Head of caudate nucleus (tissue), 42 donors: ENCODE measurements at regions of chr4 and their contacts with region 1.

Region 1: DNA sequence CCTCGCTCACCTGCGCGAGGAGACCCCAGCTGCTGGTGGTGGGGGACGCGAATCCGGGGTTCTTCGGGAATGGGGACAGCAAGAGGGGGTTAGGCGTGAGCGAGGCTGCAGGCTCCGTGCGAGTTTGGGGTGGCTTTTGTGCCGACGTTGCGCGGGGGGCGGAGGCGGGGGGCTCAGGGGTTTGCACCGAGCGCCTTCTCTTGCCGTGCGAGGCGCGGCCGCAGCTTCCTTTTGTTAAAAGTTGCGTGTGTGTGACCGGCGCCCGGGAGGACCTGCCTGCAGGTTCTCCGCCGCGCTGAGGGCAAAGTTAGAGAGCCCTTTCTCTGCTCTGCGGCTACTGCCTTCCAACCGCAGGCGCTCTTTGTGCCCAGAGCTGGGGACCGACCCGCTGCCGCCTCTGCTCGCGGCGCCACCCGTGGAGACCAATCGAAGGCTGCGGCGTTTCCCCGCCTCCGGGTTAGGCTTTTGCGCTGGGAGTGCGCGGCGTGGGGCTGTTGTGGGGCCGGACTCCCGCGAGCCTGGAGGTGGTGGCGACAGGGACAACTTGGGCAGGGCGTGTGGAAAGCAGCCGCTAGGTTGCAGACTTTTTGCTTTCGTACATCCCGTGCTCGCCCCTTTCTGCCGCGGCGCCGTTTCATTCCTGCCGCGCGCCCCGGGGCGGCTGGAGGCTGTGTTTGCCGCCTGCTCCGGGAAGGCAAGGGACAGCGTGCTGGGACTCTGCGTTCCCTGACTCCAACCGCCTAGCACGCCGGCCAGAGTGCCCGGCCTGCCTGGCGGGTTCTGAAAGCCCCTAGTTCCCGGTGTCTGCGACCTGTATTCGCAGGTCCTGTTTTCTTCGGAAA is 716 bp downstream of the KIT start:
- DNase-seq: peak; percentile 12 to 88 (median 67)

Region 2: GRCh38 chr4:54731552-54731951 is 73.1 kb after region 1 on chr4:
- intact Hi-C with region 1: loop called (anchors 10 kb)
- DNase-seq: no peak

Region 3: DNA sequence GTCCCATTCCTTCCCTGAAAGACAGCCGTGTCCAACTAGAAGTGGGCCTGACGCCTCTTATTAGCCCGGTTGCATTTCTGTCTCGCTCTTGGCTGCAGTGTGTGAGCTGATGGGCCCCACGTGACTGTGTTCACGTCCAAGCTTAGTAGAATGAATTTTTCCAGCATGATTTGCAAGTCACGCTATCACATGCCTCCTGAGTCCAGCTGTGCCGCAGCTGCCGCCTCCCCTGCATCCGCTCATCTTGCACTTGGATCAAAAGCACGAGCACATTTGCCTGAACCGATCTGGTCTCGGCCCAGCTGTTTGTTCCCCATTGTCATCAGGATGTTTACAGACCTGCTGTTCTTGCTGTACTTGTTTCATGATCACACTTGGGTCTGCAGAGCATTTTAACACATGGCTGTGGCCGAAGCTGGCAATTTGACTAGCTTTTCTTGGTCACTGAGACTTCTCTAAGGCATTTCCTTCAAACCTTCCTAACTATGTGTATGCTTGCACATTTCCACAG is 125.7 kb after region 1 on chr4:
- intact Hi-C with region 1: loop called (anchors 10 kb)
- DNase-seq: peak; percentile 57 to 96 (median 82)

Region 4: DNA sequence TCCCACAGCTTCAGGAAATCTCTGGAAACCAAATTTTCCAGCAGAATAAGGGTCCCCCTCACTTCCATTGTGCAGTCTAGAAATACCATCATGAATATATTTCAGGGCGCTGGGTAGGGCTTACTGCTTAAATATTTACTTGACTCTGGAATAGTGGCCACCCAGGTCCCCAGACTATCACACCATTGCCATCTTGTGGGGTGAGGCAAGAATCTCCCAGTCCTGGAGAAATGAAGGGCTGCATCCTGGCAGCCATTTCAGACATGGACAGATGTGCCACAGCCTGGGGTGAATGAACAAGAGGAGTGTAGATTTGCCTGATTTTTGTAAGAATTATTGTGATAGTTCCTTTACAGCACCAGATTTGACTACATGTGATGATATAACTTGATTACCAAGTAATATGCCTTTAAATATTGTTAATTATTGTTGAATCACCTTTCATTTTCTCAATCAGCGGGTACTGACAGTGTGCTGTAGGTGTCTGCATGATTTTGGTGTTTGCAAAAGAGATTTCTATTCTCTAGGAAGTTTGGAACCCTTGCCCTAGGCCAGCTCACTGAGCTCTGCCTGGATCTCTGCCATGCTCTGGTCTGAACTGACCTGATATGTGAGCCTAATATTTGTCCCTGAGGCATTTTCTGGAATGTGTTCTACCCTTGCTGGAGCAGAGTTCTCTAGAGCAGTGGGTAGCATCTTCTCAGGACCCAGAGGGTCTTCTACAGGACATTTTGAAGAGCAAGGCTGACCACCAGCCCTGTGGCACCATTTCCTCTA is 182.7 kb after region 1 on chr4:
- intact Hi-C with region 1: loop called (anchors 10 kb)
- DNase-seq: peak in 39 of 42 donors; percentile 7 to 82 (median 49)